Endothelial cell of umbilical vein (primary cell): ENCODE measurements at regions of chr4 and their contacts with region 1.

Region 1: GRCh38 chr4:69823481-69824186 is 36.3 kb downstream of the SULT1E1 start:
- DNase-seq: peak; percentile 76
- H3K4me3 ChIP-seq: no peak overlapping the region
- H3K27ac ChIP-seq: peak overlapping the region; percentile 22
- H3K4me1 ChIP-seq: peaks cover 11% of the 10 kb centered on the region
- H3K27me3 ChIP-seq: no peaks in the 10 kb centered on the region
- CTCF ChIP-seq: peak; percentile 57 to 59
- POLR2A ChIP-seq: no peak

Region 2: DNA sequence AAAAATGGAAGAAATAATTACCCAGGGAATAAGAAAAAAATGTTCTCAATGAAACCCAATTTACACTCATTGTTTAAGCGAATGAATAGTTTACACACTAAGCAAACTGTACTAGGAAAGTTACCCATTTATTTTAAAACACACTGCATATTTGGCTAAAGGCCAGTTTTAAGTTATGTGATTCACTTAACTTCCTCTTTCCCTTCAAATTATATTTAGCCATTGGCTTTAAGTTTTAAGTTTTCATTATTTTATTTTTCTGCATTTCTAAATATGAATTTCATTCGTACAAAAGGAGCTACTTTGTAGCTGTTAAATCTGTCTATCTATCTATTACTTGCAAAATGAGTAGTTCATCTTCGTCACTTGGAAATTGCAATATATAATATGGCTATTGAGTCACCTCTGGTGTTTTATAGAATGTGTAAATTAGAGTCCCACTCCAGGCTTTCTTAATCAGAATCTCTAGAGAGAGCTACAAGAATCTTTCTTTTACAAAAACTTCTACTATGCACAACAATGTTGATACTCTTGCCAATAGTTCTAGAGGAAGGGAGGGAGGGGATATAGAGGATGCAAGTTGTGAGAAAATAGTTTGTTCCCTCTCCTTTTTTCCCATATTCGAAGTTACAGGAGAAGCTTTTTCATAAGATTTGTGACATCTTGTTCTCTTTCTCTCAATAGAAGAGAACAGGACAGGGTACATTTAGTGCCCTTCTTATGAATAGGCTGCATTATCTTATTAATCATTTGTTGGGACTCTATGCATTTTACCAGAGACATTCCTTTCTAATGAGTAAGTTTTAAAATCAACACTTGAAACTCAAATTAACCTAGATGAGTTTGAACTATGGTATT is 105.0 kb before region 1 on chr4:
- CTCF ChIA-PET with region 1: interaction called, 11 read pairs
- POLR2A ChIA-PET with region 1: no interaction called
- dilution Hi-C with region 1: no loop called
- intact Hi-C with region 1: loop called (anchors 1 kb)
- DNase-seq: peak; percentile 83
- H3K4me3 ChIP-seq: no peak overlapping the region
- H3K27ac ChIP-seq: peak overlapping the region; percentile 80
- H3K4me1 ChIP-seq: peaks cover 56% of the 10 kb centered on the region
- H3K27me3 ChIP-seq: no peaks in the 10 kb centered on the region
- CTCF ChIP-seq: no peak
- POLR2A ChIP-seq: peak; percentile 4

Region 3: DNA sequence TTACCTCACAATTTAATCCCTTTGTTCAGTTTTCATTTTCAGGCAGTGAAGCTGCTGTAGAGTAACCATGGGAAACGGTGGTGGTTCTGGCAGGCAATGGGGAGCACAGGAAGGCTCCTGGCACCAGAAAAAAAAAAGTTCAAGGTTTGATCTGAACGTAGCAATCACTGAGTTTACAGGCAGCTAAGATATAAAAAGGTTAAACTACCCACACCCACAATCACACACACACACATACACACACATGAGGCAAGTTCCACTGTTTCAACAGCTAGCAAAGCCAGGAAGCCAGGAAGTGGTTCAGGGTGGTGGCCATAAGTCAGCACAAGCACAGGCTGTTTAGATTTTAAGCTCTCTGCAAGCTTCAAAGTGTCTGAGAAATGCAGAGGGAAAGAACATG is 63.2 kb before region 1 on chr4 and contains the start of gene SULT1B1:
- CTCF ChIA-PET with region 1: interaction called, 16 read pairs
- POLR2A ChIA-PET with region 1: no interaction called
- dilution Hi-C with region 1: no loop called
- intact Hi-C with region 1: loop called (anchors 1 kb)
- DNase-seq: peak; percentile 89
- H3K4me3 ChIP-seq: peak within 1 kb of the TSS; percentile 21 to 79 (median 27)
- H3K27ac ChIP-seq: peak within 1 kb of the TSS; percentile 95
- H3K4me1 ChIP-seq: peaks cover 69% of the 10 kb centered on the region
- H3K27me3 ChIP-seq: no peaks in the 10 kb centered on the region
- CTCF ChIP-seq: no peak
- POLR2A ChIP-seq: no peak
- total RNA-seq, gene SULT1B1: 59.5 and 68.2 TPM in 2 replicates

Region 4: DNA sequence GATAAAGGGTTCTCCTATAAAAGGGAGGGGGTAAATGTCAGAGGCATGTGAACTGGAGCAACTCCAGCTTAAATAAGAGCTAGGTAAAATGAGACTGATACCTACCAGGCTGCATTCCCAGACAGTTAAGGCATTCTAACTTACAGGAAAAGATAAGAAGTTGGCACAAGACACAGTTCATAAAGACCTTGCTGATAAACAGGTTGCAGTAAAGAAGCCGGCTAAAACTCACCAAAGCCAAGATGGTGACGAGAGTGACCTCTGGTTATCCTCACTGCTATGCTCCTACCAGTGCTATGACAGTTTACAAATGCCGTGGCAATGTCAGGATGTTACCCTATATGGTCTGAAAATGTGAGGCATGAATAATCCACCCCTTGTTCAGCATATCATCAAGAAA is 50.1 kb before region 1 on chr4:
- CTCF ChIA-PET with region 1: interaction called, 4 read pairs
- POLR2A ChIA-PET with region 1: no interaction called
- dilution Hi-C with region 1: no loop called
- intact Hi-C with region 1: loop called (anchors 1 kb)
- DNase-seq: peak; percentile 97
- H3K4me3 ChIP-seq: no peak overlapping the region
- H3K27ac ChIP-seq: peak overlapping the region; percentile 95
- H3K4me1 ChIP-seq: peaks cover 22% of the 10 kb centered on the region
- H3K27me3 ChIP-seq: no peaks in the 10 kb centered on the region
- CTCF ChIP-seq: no peak
- POLR2A ChIP-seq: no peak

Region 5: DNA sequence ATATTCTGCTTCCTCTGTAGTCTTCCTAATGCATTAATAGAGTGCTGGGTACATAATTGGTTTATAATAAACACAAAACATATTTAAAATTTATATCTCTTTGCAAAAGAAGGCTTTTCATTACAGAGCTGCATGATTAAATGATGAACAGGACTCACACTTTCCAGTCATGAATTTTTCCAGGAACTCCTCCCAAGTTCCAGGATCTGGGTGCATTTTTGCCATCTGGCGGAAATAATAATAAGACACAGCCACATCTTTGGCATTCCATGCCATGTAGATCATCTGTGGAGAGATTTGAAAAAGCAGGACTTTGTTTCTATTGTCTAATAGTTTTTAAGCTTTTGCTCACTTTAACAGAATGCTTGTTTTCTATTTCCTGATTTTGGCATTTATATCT is 23.0 kb before region 1 on chr4:
- CTCF ChIA-PET with region 1: interaction called, 8 read pairs
- POLR2A ChIA-PET with region 1: no interaction called
- dilution Hi-C with region 1: no loop called
- intact Hi-C with region 1: loop called (anchors 1 kb)
- DNase-seq: peak; percentile 86
- H3K4me3 ChIP-seq: no peak overlapping the region
- H3K27ac ChIP-seq: peak overlapping the region; percentile 97
- H3K4me1 ChIP-seq: peaks cover 23% of the 10 kb centered on the region
- H3K27me3 ChIP-seq: no peaks in the 10 kb centered on the region
- CTCF ChIP-seq: no peak
- POLR2A ChIP-seq: peak; percentile 31

Region 6: GRCh38 chr4:69874516-69874915 is 50.9 kb after region 1 on chr4:
- CTCF ChIA-PET with region 1: interaction called, 34 read pairs
- POLR2A ChIA-PET with region 1: no interaction called
- dilution Hi-C with region 1: no loop called
- intact Hi-C with region 1: no loop called
- DNase-seq: no peak
- H3K4me3 ChIP-seq: no peak overlapping the region
- H3K27ac ChIP-seq: no peak overlapping the region
- H3K4me1 ChIP-seq: no peaks in the 10 kb centered on the region
- H3K27me3 ChIP-seq: no peaks in the 10 kb centered on the region
- CTCF ChIP-seq: no peak
- POLR2A ChIP-seq: no peak

Region 7: DNA sequence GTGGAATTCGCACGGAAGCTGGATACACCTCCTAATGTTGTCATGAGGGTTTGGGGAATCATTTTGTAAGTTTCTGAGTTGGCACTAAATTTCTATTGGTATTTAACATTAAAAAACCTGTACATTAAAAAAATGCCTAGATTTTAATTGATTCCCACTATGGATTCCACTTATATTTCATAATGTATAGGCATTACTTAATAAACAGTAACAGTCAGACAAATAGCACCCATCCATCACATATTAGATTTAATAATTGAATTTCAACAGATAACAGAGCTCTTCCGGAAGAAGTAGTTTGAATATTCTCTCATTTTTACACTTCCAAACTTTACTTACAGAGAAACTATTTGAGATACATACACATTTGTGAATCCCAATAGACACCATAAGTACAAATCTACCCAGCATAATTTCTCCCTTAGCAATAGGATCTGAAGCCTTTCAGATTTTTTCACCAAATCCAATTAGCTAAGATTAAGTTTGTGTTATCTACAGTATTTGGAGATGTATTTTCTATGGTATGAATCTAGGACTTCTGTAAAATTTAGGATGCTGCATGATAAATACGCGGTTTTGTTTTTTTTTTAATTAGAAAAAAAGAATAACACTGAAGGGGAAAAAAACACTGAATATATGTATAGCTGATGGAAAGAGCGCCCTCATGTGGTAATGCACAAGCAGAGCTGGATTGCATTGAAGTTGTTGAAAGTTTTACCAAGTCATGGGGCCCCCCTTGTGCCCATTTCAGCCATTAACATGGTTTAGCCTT is 359.7 kb after region 1 on chr4:
- CTCF ChIA-PET with region 1: interaction called, 6 read pairs
- POLR2A ChIA-PET with region 1: no interaction called
- dilution Hi-C with region 1: no loop called
- intact Hi-C with region 1: loop called (anchors 1 kb)
- DNase-seq: peak; percentile 53
- H3K4me3 ChIP-seq: no peak overlapping the region
- H3K27ac ChIP-seq: no peak overlapping the region
- H3K4me1 ChIP-seq: no peaks in the 10 kb centered on the region
- H3K27me3 ChIP-seq: no peaks in the 10 kb centered on the region
- CTCF ChIP-seq: peak; percentile 72 to 80
- POLR2A ChIP-seq: no peak